CD4-positive, alpha-beta T cell (primary cell): ENCODE measurements at regions of chr7 and their contacts with region 1.

Region 1: GRCh38 chr7:148987010-148987750 is 41.1 kb downstream of the PDIA4 start:
- DNase-seq: peak; percentile 58 to 94 (median 70)
- ATAC-seq: peak; percentile 71
- H3K4me3 ChIP-seq: peak overlapping the region; percentile 95
- H3K4me3 Mint-ChIP-seq: peak overlapping the region; percentile 96
- H3K27ac ChIP-seq: peak overlapping the region; percentile 73 to 94
- H3K27ac Mint-ChIP-seq: peak overlapping the region; percentile 95
- H3K4me1 ChIP-seq: peaks cover 41% of the 10 kb centered on the region
- H3K4me1 Mint-ChIP-seq: peaks cover 55% of the 10 kb centered on the region
- H3K27me3 ChIP-seq: no peaks in the 10 kb centered on the region
- H3K27me3 Mint-ChIP-seq: peaks cover 5% of the 10 kb centered on the region
- CTCF ChIP-seq: no peak

Region 2: GRCh38 chr7:148940702-148941597 is 46.2 kb before region 1 on chr7:
- CTCF ChIA-PET with region 1: no interaction called
- POLR2A ChIA-PET with region 1: interaction called, 18 read pairs
- intact Hi-C with region 1: loop called (anchors 2 to 5 kb)
- DNase-seq: peak; percentile 37 to 87 (median 57)
- ATAC-seq: peak; percentile 69
- H3K4me3 ChIP-seq: peak overlapping the region; percentile 89
- H3K4me3 Mint-ChIP-seq: peak overlapping the region; percentile 97
- H3K27ac ChIP-seq: peak overlapping the region; percentile 87 to 88
- H3K27ac Mint-ChIP-seq: peak overlapping the region; percentile 98
- H3K4me1 ChIP-seq: peaks cover 7% of the 10 kb centered on the region
- H3K4me1 Mint-ChIP-seq: peaks cover 27% of the 10 kb centered on the region
- H3K27me3 ChIP-seq: no peaks in the 10 kb centered on the region
- H3K27me3 Mint-ChIP-seq: no peaks in the 10 kb centered on the region
- CTCF ChIP-seq: no peak

Region 3: DNA sequence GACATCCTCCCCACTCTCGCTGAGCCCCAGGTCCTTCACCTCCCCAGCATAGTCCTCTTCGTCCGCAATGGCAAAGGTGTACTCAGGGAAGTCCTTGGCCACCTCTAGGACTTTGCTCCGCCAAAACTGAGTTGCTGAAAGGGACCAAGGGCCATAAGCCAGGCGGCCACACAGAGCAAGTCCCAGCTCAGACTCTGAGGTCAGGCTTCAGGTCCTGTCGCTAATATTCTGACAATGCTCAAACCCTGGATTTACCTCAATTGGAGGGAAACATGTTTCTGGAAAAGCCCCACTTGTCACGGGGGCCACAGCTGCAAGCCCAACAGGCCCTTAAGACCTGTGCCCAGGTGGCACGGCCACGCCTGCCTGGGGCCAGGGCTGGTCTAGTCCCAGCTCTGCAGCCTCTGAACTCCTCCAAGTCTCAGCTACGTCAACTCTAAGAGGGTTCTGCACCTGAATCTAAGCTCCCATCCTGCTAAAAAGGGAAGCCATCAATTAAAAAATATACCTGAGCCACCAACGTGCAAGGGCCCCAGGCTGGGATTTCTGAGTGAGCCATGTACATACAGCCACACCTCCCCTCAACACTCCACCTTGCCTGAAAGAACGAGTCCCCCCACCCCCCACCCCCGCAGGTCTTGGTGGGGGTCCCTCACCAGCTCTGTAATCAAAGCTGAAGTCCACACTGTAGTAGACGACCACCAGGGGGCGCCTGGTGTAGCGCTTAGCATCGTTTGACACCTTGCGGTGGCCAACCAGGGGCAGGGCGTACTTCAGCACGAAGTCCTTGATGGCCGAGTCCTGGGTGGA is 18.3 kb after region 1 on chr7:
- CTCF ChIA-PET with region 1: interaction called, 11 read pairs
- POLR2A ChIA-PET with region 1: interaction called, 4 read pairs
- intact Hi-C with region 1: no loop called
- DNase-seq: peak; percentile 75 to 92 (median 80)
- ATAC-seq: peak; percentile 90
- H3K4me3 ChIP-seq: no peak overlapping the region
- H3K4me3 Mint-ChIP-seq: no peak overlapping the region
- H3K27ac ChIP-seq: no peak overlapping the region
- H3K27ac Mint-ChIP-seq: peak overlapping the region; percentile 46
- H3K4me1 ChIP-seq: peaks cover 12% of the 10 kb centered on the region
- H3K4me1 Mint-ChIP-seq: peaks cover 6% of the 10 kb centered on the region
- H3K27me3 ChIP-seq: no peaks in the 10 kb centered on the region
- H3K27me3 Mint-ChIP-seq: no peaks in the 10 kb centered on the region
- CTCF ChIP-seq: peak; percentile 95

Region 4: GRCh38 chr7:149422129-149422913 is 435.1 kb after region 1 on chr7:
- CTCF ChIA-PET with region 1: no interaction called
- POLR2A ChIA-PET with region 1: no interaction called
- intact Hi-C with region 1: loop called in 1 of 2 experiments (anchors 10 kb)
- DNase-seq: peak; percentile 33 to 93 (median 69)
- ATAC-seq: peak; percentile 92
- H3K4me3 ChIP-seq: peak overlapping the region; percentile 75
- H3K4me3 Mint-ChIP-seq: peak overlapping the region; percentile 70
- H3K27ac ChIP-seq: peak overlapping the region; percentile 16 to 76
- H3K27ac Mint-ChIP-seq: peak overlapping the region; percentile 68
- H3K4me1 ChIP-seq: peaks cover 17% of the 10 kb centered on the region
- H3K4me1 Mint-ChIP-seq: no peaks in the 10 kb centered on the region
- H3K27me3 ChIP-seq: no peaks in the 10 kb centered on the region
- H3K27me3 Mint-ChIP-seq: no peaks in the 10 kb centered on the region
- CTCF ChIP-seq: peak; percentile 29